ENCODE measurements at regions of chr19 and their contacts with region 1.

Region 1: DNA sequence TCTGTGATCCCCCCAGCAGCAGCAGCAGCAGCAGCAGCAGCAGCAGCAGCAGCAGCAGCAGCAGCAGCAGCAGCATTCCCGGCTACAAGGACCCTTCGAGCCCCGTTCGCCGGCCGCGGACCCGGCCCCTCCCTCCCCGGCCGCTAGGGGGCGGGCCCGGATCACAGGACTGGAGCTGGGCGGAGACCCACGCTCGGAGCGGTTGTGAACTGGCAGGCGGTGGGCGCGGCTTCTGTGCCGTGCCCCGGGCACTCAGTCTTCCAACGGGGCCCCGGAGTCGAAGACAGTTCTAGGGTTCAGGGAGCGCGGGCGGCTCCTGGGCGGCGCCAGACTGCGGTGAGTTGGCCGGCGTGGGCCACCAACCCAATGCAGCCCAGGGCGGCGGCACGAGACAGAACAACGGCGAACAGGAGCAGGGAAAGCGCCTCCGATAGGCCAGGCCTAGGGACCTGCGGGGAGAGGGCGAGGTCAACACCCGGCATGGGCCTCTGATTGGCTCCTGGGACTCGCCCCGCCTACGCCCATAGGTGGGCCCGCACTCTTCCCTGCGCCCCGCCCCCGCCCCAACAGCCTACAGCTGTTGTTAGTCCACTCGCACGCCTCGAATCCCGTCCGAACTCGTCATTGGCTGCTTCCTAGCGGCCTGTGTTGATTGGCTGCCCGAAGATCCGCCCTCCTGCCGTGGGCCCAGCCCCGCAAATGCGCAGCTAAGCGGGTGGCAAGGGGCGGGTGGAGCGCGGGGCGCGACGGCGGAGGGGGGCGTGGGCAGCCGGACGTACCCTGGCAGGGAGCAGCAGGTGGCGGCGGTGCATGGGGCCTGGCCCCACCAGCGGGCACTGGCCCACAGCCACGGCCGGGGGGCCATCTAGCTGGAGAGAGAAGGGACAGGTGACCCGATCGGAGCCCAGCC is 1.4 kb upstream of the SIX5 start:
- DNase-seq: peak; percentile 88
- CTCF ChIP-seq: peak; percentile 94

Region 2: DNA sequence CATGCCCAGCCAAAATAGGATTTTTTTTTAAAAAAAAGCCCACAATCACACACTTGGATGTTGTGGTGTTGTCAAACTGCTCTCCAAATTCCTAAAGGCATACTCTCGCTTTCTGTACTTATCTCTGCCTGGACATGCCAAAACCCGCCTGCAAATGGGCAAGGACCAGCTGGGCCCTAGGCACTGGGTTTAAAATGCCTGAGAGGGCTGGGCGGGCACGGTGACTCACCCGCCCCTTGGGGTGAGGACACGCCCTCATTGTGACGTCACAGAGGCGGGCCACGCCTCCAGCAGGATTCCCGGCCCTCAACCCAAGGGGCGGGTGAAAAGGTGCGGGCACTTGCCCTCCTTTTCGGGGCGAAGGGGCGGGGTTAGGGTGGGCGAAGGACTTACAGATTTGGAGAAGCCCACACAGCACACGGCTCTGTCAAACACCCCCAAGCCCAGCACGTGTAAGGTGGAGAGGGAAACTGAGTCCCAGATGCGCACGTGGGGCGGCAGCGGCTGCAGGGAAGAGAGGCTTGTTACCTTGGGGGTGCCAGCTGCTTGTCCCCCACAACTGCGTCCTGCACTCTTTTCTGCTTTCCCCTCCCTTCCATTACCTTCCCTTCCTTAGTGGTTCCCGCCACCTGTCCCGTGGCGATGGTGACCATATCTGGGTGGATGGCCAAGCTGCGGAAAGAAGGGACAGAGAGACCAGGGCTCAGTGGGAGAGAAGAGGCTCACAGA is 137.8 kb before region 1 on chr19:
- CTCF ChIA-PET with region 1: no interaction called
- POLR2A ChIA-PET with region 1: no interaction called
- DNase-seq: peak; percentile 65
- CTCF ChIP-seq: no peak

Region 3: GRCh38 chr19:45692187-45693105 is 78.0 kb before region 1 on chr19 and contains the start of gene QPCTL:
- CTCF ChIA-PET with region 1: interaction called, 20 read pairs
- POLR2A ChIA-PET with region 1: no interaction called
- DNase-seq: peak; percentile 95
- CTCF ChIP-seq: no peak

Region 4: GRCh38 chr19:45730389-45731288 is 39.8 kb before region 1 on chr19 and contains the start of gene FBXO46:
- CTCF ChIA-PET with region 1: interaction called, 12 read pairs
- POLR2A ChIA-PET with region 1: interaction called, 3 read pairs
- DNase-seq: peak; percentile 96
- CTCF ChIP-seq: peak; percentile 19

Region 5: DNA sequence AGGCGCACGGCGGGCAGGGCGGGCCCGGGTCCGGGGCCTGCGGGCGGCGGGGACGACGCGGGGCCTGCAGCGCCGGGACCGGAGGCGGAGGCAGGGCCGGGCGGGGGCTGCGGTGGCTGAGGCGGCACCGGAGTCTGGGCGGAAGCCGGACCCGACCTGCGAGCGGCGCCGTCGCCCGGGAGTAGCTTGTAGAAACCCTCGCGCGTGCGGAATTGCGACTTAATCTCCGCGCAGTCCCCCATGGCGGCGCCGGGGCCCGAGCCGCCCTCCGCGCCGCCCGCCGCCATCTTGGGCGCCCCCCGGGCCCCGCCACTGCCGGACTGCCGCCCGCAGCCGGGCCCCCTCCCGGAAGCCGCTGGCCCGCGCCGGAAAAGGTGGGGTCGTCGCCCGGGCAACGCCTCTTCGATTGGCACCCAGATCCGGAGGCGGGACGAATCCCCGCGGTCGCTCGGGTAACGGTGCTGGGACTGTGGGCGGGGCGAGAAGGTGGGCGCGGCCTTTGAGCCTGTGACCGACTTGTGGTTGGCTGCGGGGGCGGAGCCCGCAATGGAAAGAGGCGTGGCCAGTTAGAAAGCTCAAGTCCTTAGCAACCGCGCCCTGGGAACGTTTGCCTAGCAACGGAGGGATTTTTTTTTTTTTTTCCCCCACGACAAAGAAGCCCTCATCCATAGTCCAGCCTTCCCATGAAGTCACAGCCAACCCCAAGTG is 22.2 kb after region 1 on chr19 and contains the start of gene DMWD:
- CTCF ChIA-PET with region 1: interaction called, 77 read pairs
- POLR2A ChIA-PET with region 1: interaction called, 3 read pairs
- DNase-seq: peak; percentile 99
- CTCF ChIP-seq: no peak

Region 6: DNA sequence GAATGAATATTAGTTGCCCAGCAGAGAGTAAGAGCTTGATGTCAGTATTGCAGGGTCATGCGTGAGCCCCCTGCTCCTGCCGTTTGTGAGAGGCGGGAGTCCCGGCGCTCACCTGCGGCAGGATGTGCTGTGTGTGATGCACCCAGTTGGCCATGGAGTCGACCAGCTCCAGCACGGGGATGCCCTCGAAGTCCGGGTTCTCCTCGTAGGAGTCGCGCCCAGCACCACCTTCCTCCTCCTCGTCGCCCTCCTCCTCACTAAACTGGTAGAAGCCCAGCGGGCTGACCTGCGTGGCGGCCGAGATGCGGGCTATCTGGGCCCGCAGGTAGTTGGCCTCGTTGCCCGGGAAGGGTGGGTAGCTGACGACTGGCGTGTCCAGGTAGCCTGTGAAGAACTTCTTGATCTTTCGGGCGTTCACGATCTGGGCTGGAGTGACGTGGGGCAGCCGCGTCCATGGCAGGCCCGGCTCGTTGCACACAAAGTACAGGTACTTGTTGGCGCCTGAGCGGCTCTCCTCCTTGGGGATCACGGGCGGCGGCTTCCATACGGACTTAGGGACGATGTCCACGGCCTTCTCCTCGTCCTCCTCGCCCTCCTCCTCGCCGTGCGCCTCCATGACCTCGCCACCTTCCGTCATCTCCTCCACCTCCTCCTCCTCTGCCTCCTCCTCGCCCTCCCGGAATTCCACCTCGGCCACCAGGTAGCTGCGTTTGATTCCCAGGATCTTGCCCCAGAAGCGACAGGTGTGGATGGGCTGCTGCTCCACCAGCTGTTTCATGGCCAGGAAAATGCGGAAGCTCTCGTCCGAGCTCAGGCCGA is 33.9 kb after region 1 on chr19:
- CTCF ChIA-PET with region 1: interaction called, 63 read pairs
- POLR2A ChIA-PET with region 1: no interaction called
- DNase-seq: no peak
- CTCF ChIP-seq: no peak

Measured in GM10248 (cell line).